Motor neuron (in vitro differentiated cells): ENCODE measurements at regions of chr1 and their contacts with region 1.

Region 1: DNA sequence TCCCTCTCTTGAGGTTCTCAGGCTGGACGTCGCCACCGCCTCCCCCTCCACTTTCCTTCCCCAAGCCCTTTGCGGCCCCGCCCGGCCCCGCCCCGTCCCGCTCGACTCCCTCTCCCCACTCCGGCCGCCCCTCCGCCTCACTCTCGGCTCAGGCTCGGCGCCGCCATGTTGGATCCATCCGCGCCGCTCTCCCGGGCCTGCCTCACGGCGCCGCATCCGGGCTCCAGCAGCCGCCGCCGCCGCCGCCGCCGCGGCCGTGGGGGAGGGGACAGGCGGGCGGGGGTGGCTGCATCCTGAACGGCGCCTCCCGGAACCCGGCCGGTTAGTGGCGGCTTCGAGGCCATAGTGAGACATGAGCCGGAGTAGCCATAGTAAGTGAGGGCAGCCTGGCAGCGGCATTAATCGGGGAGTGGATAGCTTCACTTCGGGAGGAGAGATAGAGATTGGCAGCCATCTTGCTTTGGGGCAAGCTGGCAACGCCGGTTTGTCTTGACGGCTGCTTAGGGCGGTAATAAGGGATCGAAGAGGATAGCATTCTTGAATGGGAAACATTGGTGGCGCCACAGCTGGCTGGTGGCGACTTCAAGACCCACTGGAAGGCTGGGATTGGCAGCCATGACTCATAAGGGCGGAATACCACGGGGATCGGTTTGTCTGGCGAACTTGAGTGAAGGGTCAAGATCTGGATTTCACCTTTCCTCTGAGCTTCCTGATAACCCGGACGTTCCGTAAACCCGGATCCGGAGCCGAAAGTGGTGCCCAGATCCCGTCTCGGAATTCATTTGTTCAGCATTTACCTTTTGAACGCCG is at the start of gene DEDD:
- ATAC-seq: peak; percentile 75 to 90 (median 88)
- H3K4me3 ChIP-seq: peak within 1 kb of the TSS; percentile 45 to 74 (median 55)
- H3K27ac ChIP-seq: peak within 1 kb of the TSS; percentile 96 to 99
- H3K4me1 ChIP-seq: peaks cover 15 to 22% of the 10 kb centered on the region in 2 donors
- total RNA-seq, gene DEDD: 12.6 to 34.4 (median 23.0) TPM

Region 2: GRCh38 chr1:160046494-160047110 is 1086.0 kb before region 1 on chr1:
- in situ Hi-C with region 1: no loop called
- ATAC-seq: peak; percentile 61 to 94 (median 82)
- H3K4me3 ChIP-seq: no peak overlapping the region
- H3K27ac ChIP-seq: no peak overlapping the region
- H3K4me1 ChIP-seq: peaks cover 8 to 27% of the 10 kb centered on the region in 2 donors

Region 3: DNA sequence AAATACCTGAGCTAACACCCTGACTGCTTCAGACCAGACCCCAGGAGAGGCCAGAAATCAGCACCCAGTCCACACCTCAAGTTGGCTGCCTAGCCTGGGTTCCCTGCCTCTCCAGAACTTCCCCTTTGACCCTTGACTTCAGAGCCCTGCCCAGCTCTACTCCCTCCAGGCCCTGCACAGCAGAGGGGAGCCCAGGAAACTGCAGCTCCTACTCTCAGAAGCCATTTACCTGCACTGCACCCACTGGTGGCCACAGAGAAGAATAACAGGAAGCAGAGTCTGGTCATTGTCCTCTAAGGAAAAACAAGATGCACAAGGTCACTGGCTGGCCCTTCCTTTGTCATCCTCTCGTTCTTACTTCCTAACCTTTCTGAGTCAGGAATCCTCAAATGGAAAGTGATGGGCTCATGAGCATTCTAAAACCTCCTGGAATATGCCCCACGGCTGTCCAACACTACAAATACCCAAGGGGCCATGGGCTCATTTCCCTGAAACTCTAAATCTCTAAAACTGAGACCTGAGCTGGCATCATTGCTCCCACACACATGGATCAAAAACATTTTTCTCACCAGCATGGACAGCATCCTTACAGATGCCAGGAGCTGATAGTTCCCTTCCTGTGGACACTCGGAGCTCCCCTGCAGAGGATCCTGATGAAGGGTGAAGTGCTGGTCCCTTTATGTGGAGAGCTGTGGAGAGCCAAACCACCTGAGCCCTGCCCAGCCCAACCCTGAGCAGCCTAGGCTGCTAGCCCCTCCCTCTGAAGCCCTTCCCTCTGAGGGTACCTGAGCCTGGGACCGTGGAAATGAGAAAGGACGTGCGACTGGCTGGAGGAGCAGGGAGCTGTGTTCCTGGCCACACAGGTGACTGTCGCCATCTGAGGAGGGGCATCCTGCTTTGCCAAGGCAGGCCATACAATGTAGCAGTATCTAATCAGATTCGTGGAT is 178.2 kb before region 1 on chr1 and contains the start of gene ITLN2:
- in situ Hi-C with region 1: no loop called
- ATAC-seq: peak in 3 of 8 experiments; percentile 48 to 68 (median 51)
- H3K4me3 ChIP-seq: no peak within 1 kb of the TSS
- H3K27ac ChIP-seq: no peak within 1 kb of the TSS
- H3K4me1 ChIP-seq: peaks cover 0 to 2% of the 10 kb centered on the region in 2 donors
- total RNA-seq, gene ITLN2: 0.29 to 1.8 (median 0.83) TPM in 5 of 8 experiments, not detected in the others

Region 4: GRCh38 chr1:161045750-161046571 is 86.7 kb before region 1 on chr1 and contains the start of gene USF1:
- in situ Hi-C with region 1: loop called in 1 of 9 experiments (anchors 25 kb)
- ATAC-seq: peak; percentile 80 to 87 (median 85)
- H3K4me3 ChIP-seq: peak within 1 kb of the TSS; percentile 61 to 81 (median 62)
- H3K27ac ChIP-seq: peak within 1 kb of the TSS; percentile 98 to 99
- H3K4me1 ChIP-seq: peaks cover 9 to 15% of the 10 kb centered on the region in 2 donors
- total RNA-seq, gene USF1: 60.3 to 156 (median 85.6) TPM